ENCODE measurements at regions of chr11 and their contacts with region 1.

Region 1: DNA sequence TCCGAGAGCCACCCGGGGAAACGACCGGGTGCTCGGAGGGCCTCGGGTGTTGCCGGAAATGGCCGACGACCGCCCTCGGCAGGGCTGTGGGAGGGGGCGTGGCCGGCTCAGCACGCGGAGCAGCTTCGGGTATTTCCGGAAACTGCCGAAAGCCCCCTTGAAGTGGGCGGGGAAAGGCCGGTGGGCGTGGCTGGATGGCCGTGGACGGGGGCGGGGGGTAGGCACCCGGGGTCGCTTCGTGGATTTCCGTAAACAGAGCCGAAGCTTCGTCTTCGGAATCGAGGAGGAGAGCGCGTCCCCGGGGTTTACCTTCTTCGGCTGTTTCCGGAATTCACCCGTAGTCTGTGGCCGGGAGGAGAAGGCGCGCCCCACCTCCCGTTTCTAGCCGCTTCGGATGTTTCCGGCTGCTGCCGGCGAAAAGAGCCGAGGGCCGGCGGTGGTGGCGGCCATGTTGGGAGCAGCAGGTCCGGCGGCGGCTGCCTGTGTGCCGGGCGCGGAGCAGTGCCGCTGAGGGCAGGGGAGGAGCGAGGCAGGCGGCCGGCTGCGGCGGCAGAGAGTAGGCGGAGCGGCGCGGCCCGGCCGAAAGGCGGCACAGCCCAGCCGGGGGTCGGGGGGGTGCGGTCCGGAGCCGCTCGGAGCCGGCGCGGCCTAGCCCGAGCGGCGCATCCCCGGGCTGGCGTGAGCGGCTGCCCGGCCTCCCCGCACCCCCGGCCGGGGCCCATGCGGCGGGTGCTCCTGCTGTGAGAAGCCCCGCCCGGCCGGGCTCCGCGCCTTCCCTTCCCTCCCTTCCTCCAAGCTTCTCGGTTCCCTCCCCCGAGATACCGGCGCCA is at the start of gene MARK2:
- DNase-seq: peak; percentile 99
- ATAC-seq: peak; percentile 80
- H3K4me3 ChIP-seq: peak within 1 kb of the TSS; percentile 75
- H3K27ac ChIP-seq: peak within 1 kb of the TSS; percentile 21
- H3K4me1 ChIP-seq: peaks cover 42% of the 10 kb centered on the region
- H3K27me3 ChIP-seq: no peaks in the 10 kb centered on the region
- CTCF ChIP-seq: no peak
- total RNA-seq, gene MARK2: 60.1 and 66.5 TPM in 2 replicates

Region 2: GRCh38 chr11:63289658-63290057 is 549.2 kb before region 1 on chr11:
- CTCF ChIA-PET with region 1: no interaction called
- POLR2A ChIA-PET with region 1: no interaction called
- intact Hi-C with region 1: no loop called
- DNase-seq: peak; percentile 49
- ATAC-seq: peak; percentile 94
- H3K4me3 ChIP-seq: no peak overlapping the region
- H3K27ac ChIP-seq: no peak overlapping the region
- H3K4me1 ChIP-seq: no peaks in the 10 kb centered on the region
- H3K27me3 ChIP-seq: peaks cover 3% of the 10 kb centered on the region; the same call in 1 of the 2 replicates
- CTCF ChIP-seq: no peak

Region 3: DNA sequence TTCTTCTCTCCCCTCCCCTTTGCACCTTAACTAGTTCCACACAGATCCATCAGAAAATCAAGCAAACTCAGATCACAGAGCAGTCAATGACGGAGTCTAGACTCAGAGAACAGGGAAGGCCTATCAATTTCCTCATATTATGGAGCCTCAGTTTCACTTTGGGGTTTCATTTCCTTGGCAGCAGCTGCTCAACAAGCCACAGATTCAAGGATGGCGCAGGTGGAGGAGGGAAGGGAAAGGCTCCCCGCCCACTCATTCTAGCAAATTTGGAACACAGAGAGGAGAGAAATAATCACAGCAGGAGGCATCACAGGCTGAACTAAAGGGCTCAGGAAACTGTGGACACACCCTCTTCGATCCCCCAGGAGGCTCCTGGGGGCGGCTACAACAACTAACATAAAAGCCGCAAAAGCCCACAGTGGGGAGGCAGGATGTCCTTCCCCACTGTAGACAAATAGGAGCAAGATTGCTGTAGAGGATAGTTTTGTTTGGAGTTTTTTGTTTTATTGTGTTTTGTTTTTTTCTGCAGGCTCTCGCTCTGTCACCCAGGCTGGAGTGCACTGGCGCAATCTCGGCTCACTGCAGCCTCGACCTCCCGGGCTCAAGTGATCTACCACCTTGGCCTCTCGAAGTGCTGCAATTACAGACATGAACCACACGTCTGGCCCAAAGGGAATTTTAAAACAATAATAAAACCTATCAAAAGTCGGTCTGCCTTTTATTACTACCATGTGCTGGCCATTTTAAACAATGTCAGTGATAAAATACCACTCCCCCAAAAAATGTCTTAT is 228.1 kb before region 1 on chr11:
- CTCF ChIA-PET with region 1: no interaction called
- POLR2A ChIA-PET with region 1: no interaction called
- intact Hi-C with region 1: no loop called
- DNase-seq: no peak
- ATAC-seq: no peak
- H3K4me3 ChIP-seq: no peak overlapping the region
- H3K27ac ChIP-seq: no peak overlapping the region
- H3K4me1 ChIP-seq: peaks cover 4% of the 10 kb centered on the region; the same call in 1 of the 2 replicates
- H3K27me3 ChIP-seq: no peaks in the 10 kb centered on the region
- CTCF ChIP-seq: no peak

Region 4: DNA sequence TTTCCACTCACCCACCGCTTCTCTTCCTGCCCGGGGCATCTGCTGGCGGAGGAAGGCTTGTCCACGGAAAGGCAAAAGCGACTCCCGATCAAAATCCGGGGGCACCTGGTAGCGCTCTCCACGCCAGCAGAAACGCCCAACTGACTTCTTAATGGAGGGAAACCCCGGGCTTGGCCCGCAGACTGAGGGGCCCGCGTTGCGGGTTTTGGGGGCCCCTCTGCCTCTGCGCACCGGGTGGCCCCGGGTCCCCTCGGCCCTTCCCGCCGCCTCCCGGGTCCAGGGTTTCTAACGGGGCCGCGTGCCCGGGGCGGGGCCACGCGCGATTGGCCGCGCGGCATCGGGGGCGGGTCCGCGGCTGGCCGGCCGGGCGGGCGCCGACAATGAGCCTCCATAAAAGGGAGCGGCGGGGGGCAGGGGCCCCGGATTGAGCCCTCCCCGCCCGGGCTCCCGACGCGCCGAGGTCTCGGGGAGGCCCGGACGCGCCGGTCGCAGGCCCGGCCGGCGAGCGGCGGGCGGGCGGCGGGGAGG is 25.8 kb before region 1 on chr11 and contains the start of gene SPINDOC:
- CTCF ChIA-PET with region 1: no interaction called
- POLR2A ChIA-PET with region 1: no interaction called
- intact Hi-C with region 1: no loop called
- DNase-seq: peak; percentile 78
- ATAC-seq: peak; percentile 88
- H3K4me3 ChIP-seq: peak within 1 kb of the TSS; percentile 96
- H3K27ac ChIP-seq: no peak within 1 kb of the TSS; the same call in 1 of the 2 replicates
- H3K4me1 ChIP-seq: peaks cover 17% of the 10 kb centered on the region
- H3K27me3 ChIP-seq: no peaks in the 10 kb centered on the region
- CTCF ChIP-seq: no peak
- total RNA-seq, gene SPINDOC: 61.5 and 67.2 TPM in 2 replicates

Region 5: GRCh38 chr11:63871962-63872799 is 33.3 kb after region 1 on chr11:
- CTCF ChIA-PET with region 1: interaction called, 20 read pairs
- POLR2A ChIA-PET with region 1: no interaction called
- intact Hi-C with region 1: loop called (anchors 1 kb)
- DNase-seq: peak; percentile 99
- ATAC-seq: peak; percentile 97
- H3K4me3 ChIP-seq: peak overlapping the region; percentile 28; the same call in 1 of the 2 replicates
- H3K27ac ChIP-seq: peak overlapping the region; percentile 50
- H3K4me1 ChIP-seq: peaks cover 53% of the 10 kb centered on the region
- H3K27me3 ChIP-seq: no peaks in the 10 kb centered on the region
- CTCF ChIP-seq: peak; percentile 78

Region 6: GRCh38 chr11:63906585-63906984 is 67.7 kb after region 1 on chr11:
- CTCF ChIA-PET with region 1: interaction called, 7 read pairs
- POLR2A ChIA-PET with region 1: interaction called, 6 read pairs
- intact Hi-C with region 1: loop called (anchors 1 kb)
- DNase-seq: peak; percentile 31
- ATAC-seq: no peak
- H3K4me3 ChIP-seq: no peak overlapping the region
- H3K27ac ChIP-seq: no peak overlapping the region
- H3K4me1 ChIP-seq: no peaks in the 10 kb centered on the region
- H3K27me3 ChIP-seq: no peaks in the 10 kb centered on the region
- CTCF ChIP-seq: peak; percentile 37; the same call in 1 of the 2 replicates

Region 7: DNA sequence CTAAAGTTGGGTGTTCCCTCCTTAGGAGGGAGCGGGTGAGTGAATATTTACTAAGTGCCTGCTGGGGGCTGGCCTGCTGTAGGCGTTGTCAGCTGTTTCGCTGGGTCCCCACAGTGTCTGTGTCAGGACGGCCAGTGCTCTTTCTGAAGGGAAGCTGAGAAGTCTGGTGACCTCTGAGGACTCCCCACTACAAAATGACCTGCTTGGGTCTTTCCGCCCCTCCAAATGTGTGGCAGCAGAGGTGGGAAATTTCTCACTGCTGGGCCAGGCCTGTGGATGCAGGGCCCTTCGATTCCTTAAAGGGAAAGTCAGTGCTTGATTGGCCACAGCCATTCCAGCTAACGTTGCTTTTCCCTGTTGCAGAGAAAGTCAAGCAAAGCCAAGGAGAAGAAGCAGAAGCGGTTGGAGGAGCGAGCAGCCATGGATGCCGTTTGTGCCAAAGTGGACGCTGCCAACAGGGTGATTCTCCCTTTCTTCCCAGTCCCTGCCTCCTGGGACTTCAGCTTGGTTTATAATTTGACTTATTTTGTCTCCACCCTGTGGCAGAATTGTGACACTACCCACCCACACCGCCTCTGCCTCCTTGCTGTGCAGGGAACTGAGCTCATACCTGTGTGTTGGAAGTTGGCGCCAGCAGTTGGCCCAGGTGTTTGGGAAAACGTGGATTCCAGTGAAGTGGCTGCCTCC is 106.7 kb after region 1 on chr11:
- CTCF ChIA-PET with region 1: interaction called, 28 read pairs
- POLR2A ChIA-PET with region 1: interaction called, 11 read pairs
- intact Hi-C with region 1: loop called (anchors 2 kb)
- DNase-seq: peak; percentile 87
- ATAC-seq: peak; percentile 99
- H3K4me3 ChIP-seq: no peak overlapping the region
- H3K27ac ChIP-seq: no peak overlapping the region
- H3K4me1 ChIP-seq: no peaks in the 10 kb centered on the region
- H3K27me3 ChIP-seq: no peaks in the 10 kb centered on the region
- CTCF ChIP-seq: peak; percentile 89